Motor neuron (in vitro differentiated cells): ENCODE measurements at regions of chr2 and their contacts with region 1.

Region 1: DNA sequence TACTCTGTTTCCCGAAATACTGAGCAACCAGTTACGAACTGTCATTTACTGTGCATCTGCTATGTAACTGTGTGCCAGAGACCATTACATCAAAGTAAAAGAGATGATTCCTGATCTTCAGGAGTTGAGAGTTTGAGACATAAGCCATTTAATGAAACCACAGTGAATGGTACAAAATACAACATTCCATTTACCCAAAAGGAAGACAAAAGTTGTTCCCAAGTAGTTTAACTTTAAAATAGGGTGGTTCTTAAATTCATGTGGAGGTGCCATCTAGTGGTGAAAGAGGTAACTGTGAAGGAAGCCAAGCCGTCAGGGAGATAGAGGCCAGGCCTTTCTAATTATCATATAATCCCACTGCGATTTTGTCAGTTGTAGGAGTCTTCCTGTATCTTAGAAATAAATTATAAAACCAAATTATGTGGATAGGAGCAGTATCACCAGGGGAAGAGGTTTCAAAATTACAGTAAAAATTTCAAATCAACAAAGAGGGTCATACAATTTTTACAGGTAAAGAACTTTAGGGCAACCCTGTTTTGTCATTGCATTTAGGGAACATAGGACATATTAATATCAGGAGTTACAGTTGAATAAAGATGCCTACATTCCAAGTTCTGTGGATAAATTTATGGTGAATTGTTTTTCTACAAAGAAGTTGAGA is 67.7 kb downstream of the EPAS1 start:
- ATAC-seq: peak in 3 of 8 experiments; percentile 54 to 71 (median 66)
- H3K4me3 ChIP-seq: no peak overlapping the region
- H3K27ac ChIP-seq: no peak overlapping the region
- H3K4me1 ChIP-seq: no peaks in the 10 kb centered on the region

Region 2: GRCh38 chr2:45964226-45964845 is 400.6 kb before region 1 on chr2:
- in situ Hi-C with region 1: no loop called
- ATAC-seq: peak in 5 of 8 experiments; percentile 32 to 69 (median 54)
- H3K4me3 ChIP-seq: no peak overlapping the region
- H3K27ac ChIP-seq: no peak overlapping the region
- H3K4me1 ChIP-seq: peaks cover 0 to 2% of the 10 kb centered on the region in 2 donors

Region 3: DNA sequence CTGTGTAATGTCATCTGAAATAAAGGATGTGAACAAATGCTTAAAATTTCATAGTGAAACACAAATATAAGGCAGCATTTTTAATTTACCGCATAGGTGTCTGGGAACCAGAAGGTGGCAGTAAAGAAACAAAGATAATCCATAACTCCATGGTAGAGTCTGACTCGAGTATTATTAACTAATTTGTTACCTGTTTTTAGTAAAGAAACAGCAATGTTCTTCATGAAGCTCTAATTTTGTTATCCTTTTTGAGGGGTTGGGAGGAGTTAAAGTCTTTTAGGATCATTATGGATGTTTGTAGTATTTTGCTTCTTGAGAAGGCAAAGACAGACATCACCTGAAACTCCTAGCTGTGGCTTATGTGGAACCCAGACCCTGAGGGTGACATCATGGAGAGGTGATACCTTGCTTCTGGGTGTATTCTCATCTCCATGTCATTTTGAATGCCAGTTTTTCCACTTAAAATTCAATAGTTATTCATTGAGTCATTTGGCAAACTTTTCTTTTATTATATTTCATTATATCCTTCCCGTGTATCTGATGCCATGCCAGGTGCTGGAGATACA is 353.9 kb before region 1 on chr2:
- in situ Hi-C with region 1: loop called in 1 of 9 experiments (anchors 25 kb)
- ATAC-seq: peak in 4 of 8 experiments; percentile 47 to 56 (median 54)
- H3K4me3 ChIP-seq: no peak overlapping the region
- H3K27ac ChIP-seq: no peak overlapping the region
- H3K4me1 ChIP-seq: no peaks in the 10 kb centered on the region